ENCODE measurements at regions of chr2 and their contacts with region 1.

Region 1: DNA sequence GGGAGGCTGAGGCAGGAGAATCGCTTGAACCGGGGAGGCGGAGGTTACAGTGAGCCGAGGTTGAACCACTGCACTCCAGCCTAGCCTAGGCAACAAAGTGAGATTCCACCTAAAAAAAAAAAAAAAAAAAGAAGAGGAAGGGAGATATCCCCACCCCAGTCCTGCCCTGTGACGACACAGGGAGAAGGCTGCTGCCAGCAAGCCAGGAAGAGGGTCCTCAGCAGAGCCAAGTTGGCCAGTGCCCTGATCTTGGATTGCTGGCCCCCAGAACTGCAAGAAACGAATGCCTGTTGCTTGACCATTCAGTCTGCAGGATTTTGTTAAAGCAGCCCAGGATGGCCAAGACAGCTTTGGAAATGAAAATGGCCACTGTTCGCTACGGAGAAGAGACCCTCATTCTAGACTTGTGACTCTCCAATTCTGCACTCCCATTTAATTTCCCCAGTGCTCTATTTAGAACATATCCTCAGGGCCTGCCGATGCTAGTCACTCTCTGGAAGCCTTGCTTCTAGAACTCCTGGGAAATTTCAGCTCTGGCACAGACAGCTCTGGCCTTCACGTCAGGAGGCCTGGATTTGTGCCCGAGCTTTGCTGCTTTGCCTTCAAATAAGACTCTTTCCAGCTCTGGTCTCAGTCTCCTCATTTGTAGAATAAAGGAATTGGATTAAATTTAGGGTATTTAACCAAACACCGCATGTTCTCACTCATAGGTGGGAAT is 15.7 kb upstream of the AMMECR1L start:
- ATAC-seq: no peak
- H3K4me3 ChIP-seq: no peak overlapping the region
- H3K27ac ChIP-seq: no peak overlapping the region
- H3K4me1 ChIP-seq: no peaks in the 10 kb centered on the region

Region 2: DNA sequence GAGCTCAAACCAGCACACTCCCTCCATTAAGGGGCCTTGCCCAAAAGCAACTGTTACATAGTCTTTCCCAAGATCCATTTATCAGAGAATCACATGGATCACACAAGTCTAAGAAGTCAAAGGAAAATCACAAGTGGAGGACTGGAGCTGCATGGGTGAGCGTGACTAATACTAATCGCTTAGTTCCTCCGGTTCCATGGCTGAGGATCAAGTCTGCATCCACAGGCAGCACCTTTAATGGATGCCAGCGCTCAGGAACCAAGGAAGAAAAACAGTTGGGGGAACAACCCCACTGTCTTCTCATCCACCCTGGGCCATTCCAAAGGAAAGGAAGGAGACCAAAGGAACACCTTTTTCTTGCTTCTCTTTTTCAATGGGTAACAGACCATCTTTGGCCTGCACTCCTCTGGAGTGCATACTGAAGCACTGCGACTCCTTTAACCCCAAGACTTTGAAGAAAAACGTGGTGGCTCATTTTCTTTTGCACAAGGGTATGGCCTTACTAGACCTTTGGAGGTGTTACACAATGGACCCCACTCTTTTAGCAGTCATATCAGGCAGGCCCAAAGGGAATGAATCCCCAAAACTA is 81.3 kb before region 1 on chr2:
- in situ Hi-C with region 1: no loop called
- ATAC-seq: no peak
- H3K4me3 ChIP-seq: no peak overlapping the region
- H3K27ac ChIP-seq: no peak overlapping the region
- H3K4me1 ChIP-seq: no peaks in the 10 kb centered on the region

Region 3: DNA sequence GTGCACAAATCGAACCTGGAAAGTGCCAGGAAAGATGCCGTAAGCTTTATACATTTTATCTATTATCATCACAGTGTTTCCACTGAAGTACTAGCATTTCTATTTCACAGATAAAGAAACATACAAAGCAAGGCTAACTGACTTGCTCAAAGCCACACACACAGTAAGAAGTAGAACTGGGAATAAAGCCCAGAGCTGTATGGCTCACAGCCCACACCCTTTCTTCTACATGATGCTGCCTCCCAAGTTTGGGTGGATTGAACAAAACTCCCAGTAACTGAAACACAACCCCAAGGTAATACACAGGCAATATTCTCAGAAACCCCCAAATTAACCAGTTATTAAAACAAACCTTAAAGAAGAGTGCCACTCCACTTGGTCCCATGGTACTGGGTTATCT is 115.1 kb after region 1 on chr2:
- in situ Hi-C with region 1: loop called in 1 of 9 experiments (anchors 25 kb)
- ATAC-seq: peak in 1 of 8 experiments; percentile 61
- H3K4me3 ChIP-seq: no peak overlapping the region
- H3K27ac ChIP-seq: no peak overlapping the region
- H3K4me1 ChIP-seq: no peaks in the 10 kb centered on the region